Panc1 (cell line): ENCODE measurements at regions of chr16 and their contacts with region 1.

Region 1: GRCh38 chr16:14003074-14003570 is 68.0 kb upstream of the MRTFB start:
- DNase-seq: no peak
- ATAC-seq: peak; percentile 83
- H3K4me3 ChIP-seq: peak overlapping the region in 1 of 2 experiments; percentile 21; a peak in 1 of 4 replicates
- H3K27ac ChIP-seq: peak overlapping the region; percentile 8; the same call in 1 of the 2 replicates
- H3K4me1 ChIP-seq: peaks cover 20% of the 10 kb centered on the region
- H3K27me3 ChIP-seq: no peaks in the 10 kb centered on the region
- CTCF ChIP-seq: no peak

Region 2: GRCh38 chr16:13945744-13946505 is 57.2 kb before region 1 on chr16:
- CTCF ChIA-PET with region 1: no interaction called
- POLR2A ChIA-PET with region 1: no interaction called
- in situ Hi-C with region 1: no loop called
- intact Hi-C with region 1: no loop called
- DNase-seq: no peak
- ATAC-seq: no peak
- H3K4me3 ChIP-seq: no peak overlapping the region
- H3K27ac ChIP-seq: no peak overlapping the region
- H3K4me1 ChIP-seq: no peaks in the 10 kb centered on the region
- H3K27me3 ChIP-seq: no peaks in the 10 kb centered on the region
- CTCF ChIP-seq: no peak

Region 3: DNA sequence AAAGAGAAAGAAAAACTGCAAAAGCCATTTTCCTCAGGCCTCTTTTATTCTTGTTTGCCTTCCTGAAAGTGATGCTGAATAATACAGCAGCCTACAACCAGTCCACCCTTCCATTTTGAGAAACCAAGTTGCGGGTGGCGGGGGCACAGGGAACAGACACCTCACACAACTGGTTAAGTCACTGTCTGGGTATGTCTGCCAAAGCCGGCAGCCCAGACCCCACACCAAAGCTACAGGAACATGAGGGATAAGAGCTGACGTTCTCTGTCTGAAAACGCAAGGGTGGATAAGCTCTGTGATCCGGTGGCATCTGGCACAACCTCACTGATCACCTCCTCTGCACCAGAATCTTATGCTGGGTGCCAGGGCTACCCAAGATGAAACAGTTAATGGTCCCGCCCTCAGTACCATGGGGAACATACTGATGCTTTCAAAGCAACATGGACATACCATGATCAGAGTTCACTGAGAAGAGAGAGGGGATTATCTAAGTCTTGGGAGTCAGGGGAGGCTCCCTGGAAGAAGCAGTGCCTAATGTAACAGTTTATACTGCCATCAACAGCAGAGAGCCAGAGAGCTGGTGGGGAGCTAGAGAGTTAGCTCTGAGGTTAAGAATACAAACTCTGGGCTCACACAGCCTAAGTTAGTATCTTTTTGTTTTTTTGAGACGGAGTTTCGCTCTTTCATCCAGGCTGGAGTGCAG is 29.6 kb before region 1 on chr16:
- CTCF ChIA-PET with region 1: no interaction called
- POLR2A ChIA-PET with region 1: interaction called, 11 read pairs
- in situ Hi-C with region 1: no loop called
- intact Hi-C with region 1: no loop called
- DNase-seq: no peak
- ATAC-seq: no peak
- H3K4me3 ChIP-seq: no peak overlapping the region
- H3K27ac ChIP-seq: peak overlapping the region; percentile 45; the same call in 1 of the 2 replicates
- H3K4me1 ChIP-seq: no peaks in the 10 kb centered on the region
- H3K27me3 ChIP-seq: no peaks in the 10 kb centered on the region
- CTCF ChIP-seq: no peak

Region 4: DNA sequence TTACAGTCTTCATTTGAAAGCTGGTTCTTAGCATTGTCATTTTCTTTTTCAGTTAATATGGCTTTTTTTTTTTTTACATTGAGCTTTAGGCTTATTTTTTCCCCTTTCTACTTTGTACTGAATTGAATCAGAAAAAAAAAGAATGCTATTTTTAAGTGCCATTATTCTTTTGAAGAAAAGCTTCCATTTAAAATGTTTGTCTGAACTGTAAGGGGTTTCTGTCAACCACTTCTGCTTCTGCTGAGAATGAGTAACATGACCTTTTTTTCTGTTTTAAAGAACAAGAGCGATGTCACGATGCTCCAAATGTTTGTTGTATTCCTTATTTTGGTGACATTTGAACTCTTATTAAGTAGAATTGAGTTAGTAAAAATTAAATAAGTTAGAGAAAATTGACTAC is 118.0 kb after region 1 on chr16:
- CTCF ChIA-PET with region 1: no interaction called
- POLR2A ChIA-PET with region 1: no interaction called
- in situ Hi-C with region 1: no loop called
- intact Hi-C with region 1: no loop called
- DNase-seq: no peak
- ATAC-seq: no peak
- H3K4me3 ChIP-seq: no peak overlapping the region
- H3K27ac ChIP-seq: no peak overlapping the region
- H3K4me1 ChIP-seq: peaks cover 20% of the 10 kb centered on the region
- H3K27me3 ChIP-seq: no peaks in the 10 kb centered on the region
- CTCF ChIP-seq: no peak